ENCODE measurements at regions of chr5 and their contacts with region 1.

Region 1: DNA sequence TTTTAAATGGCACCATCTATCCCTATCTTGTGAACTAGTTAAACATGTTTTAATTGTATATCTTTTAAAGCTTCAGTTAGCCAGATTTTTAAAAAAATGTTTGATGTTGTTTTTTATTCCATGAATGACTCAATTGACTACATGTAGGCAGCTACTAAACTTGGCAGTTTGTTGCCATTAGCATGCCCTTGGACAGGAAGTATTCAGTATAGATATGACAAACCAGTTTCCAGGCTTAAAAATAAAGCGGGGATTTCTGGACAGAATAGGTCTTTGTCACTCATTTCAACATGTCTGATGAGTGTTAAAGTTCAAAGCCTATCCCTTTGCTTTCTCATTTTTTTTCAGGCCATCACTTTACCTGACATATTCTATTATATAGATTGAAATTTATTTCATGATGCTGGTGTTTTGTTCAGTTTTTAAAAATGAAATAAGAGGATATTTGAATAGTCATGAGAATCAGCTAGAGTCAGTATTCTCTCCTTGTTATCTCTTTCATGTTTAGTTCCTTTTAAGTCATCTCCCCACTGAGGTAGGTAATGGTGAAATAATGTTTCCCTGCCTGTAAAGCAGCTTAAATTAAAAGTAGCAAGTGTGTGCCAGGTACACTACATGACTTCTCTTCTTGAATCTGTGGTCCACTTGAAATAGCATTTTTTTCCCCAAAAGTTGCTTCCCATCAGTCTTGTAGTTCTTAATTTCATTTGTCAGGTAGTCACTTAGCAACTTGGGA is 11.9 kb downstream of the TNFAIP8 start:
- DNase-seq: peak in 3 of 14 experiments; percentile 58 to 71 (median 64)
- ATAC-seq: peak; percentile 62
- H3K4me3 ChIP-seq: no peak overlapping the region
- H3K4me3 Mint-ChIP-seq: peak overlapping the region; percentile 52
- H3K27ac ChIP-seq: peak overlapping the region; percentile 43 to 47
- H3K27ac Mint-ChIP-seq: peak overlapping the region; percentile 83
- H3K4me1 ChIP-seq: peaks cover 61% of the 10 kb centered on the region
- H3K4me1 Mint-ChIP-seq: peaks cover 84% of the 10 kb centered on the region
- H3K27me3 ChIP-seq: no peaks in the 10 kb centered on the region
- H3K27me3 Mint-ChIP-seq: no peaks in the 10 kb centered on the region
- CTCF ChIP-seq: no peak

Region 2: DNA sequence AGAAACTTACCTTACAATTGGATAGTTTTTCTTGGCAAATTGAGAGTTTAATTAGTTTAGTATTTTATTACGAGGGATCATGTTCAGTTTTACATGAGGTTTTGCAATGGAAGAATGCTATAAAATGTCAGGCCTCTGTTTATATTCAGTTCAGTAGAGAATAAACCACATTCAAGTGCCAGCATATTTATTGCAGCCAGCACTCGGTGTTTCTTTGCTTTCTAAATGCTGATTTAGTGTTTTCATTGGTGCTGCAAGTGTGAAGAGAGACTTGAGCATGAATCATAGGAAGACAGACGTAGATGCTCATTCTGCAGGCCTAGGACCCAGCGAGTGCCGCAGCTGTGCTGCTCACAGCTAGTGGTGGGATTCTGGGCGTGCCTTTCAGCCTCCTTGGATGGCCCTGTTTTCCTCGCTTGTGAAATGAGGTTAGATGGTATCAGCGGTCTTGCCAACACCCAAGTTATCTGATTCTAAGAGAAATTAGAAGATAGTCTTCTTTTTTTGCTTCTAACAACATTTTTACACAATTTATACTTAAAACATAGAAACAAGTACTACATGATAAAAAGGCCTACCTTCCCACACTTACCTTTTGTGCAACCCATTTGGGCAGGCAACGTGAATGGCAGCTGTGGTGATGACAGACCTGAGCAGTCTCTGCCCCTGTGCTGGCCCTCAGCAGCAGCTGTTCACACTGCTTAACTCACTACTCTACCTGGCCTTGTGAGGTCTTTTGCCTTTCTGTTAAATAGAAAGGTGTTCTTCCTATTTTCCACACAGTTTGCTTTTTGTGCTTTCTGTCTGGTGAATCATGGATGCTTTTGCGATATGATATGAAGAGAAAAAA is 38.7 kb before region 1 on chr5:
- CTCF ChIA-PET with region 1: interaction called, 3 read pairs
- POLR2A ChIA-PET with region 1: interaction called, 301 read pairs
- intact Hi-C with region 1: loop called in 1 of 2 experiments (anchors 5 kb)
- DNase-seq: peak in 13 of 14 experiments; percentile 45 to 85 (median 67)
- ATAC-seq: peak; percentile 60
- H3K4me3 ChIP-seq: peak overlapping the region; percentile 13
- H3K4me3 Mint-ChIP-seq: peak overlapping the region; percentile 83
- H3K27ac ChIP-seq: peak overlapping the region; percentile 77 to 94
- H3K27ac Mint-ChIP-seq: peak overlapping the region; percentile 97
- H3K4me1 ChIP-seq: peaks cover 84% of the 10 kb centered on the region
- H3K4me1 Mint-ChIP-seq: peaks cover 94% of the 10 kb centered on the region
- H3K27me3 ChIP-seq: no peaks in the 10 kb centered on the region
- H3K27me3 Mint-ChIP-seq: no peaks in the 10 kb centered on the region
- CTCF ChIP-seq: no peak

Region 3: DNA sequence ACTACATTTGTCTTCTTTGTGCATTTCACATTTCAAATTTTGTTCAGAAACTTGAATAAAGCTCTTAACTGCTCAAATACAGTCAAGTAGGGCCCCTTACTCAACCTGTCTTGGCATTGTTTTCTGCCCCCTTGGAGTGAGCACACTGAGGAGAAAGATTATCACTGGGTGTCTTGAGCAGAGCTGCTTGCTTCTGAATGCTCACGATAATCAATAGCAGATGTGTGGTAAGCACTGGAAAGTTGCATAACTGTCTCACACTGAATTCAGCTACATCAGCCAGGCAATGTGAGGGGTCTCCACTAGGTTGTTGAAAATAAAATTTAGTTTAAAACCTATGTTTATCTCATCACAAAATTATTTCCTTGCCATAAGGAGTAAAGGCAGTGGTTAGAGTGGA is 19.7 kb before region 1 on chr5:
- CTCF ChIA-PET with region 1: interaction called, 8 read pairs
- POLR2A ChIA-PET with region 1: interaction called, 301 read pairs
- intact Hi-C with region 1: loop called in 1 of 2 experiments (anchors 1 kb)
- DNase-seq: no peak
- ATAC-seq: no peak
- H3K4me3 ChIP-seq: no peak overlapping the region
- H3K4me3 Mint-ChIP-seq: peak overlapping the region; percentile 11
- H3K27ac ChIP-seq: no peak overlapping the region
- H3K27ac Mint-ChIP-seq: peak overlapping the region; percentile 86
- H3K4me1 ChIP-seq: peaks cover 73% of the 10 kb centered on the region
- H3K4me1 Mint-ChIP-seq: peaks cover 96% of the 10 kb centered on the region
- H3K27me3 ChIP-seq: no peaks in the 10 kb centered on the region
- H3K27me3 Mint-ChIP-seq: no peaks in the 10 kb centered on the region
- CTCF ChIP-seq: no peak

Region 4: DNA sequence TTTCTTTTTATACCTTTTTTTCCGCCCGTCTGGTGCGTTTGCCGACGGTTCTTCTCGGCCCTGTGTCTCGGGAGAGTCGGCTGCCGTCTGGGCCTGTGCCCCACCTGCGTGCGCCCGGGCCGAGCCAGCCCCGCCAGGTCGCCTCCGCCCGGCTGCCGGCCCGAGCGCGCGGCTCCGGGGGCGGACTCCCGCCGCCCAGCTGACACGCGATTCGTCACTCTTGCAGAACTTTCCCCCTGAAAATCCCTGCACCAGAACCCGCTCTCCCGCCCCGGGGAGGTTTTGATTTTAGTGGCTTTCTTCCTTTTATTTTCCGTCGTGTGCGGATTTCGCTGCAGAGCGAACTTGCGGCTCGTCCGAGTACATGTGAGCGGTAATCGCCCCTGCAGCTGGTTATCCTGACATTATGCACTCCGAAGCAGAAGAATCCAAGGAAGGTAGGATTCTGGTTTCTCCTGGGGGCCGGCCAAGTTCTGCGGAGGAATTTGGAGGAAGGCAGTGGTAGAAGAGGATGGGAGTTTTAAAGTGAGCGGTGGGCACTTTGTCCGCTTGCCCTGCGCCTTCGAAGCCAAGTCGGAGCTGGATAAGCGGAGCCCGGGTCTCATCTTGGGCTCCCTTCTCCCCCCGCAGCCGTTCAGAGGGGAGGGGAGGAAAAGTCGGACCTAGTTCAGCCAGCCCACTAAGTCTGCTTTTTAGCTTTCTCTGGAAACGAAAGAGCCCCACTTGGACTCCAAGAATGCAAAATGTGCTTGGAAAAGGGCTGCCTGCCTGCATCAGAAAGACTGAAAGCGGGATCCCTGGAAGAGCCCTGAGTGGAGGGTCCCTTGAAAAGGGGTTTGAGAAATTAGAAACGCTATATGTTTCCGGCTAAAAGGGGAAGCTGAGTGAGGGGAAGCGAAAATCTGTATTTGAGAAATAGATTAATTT is 11.7 kb before region 1 on chr5 and contains the start of gene TNFAIP8:
- CTCF ChIA-PET with region 1: interaction called, 8 read pairs
- POLR2A ChIA-PET with region 1: interaction called, 21 read pairs
- intact Hi-C with region 1: loop called in 1 of 2 experiments (anchors 2 kb)
- DNase-seq: peak in 6 of 14 experiments; percentile 28 to 81 (median 58)
- ATAC-seq: peak; percentile 37
- H3K4me3 ChIP-seq: peak within 1 kb of the TSS; percentile 61
- H3K4me3 Mint-ChIP-seq: peak within 1 kb of the TSS; percentile 93
- H3K27ac ChIP-seq: peak within 1 kb of the TSS; percentile 63 to 76
- H3K27ac Mint-ChIP-seq: peak within 1 kb of the TSS; percentile 86
- H3K4me1 ChIP-seq: peaks cover 89% of the 10 kb centered on the region
- H3K4me1 Mint-ChIP-seq: peaks cover 97% of the 10 kb centered on the region
- H3K27me3 ChIP-seq: no peaks in the 10 kb centered on the region
- H3K27me3 Mint-ChIP-seq: no peaks in the 10 kb centered on the region
- CTCF ChIP-seq: no peak
- total RNA-seq, gene TNFAIP8: 106 to 114 TPM

Region 5: DNA sequence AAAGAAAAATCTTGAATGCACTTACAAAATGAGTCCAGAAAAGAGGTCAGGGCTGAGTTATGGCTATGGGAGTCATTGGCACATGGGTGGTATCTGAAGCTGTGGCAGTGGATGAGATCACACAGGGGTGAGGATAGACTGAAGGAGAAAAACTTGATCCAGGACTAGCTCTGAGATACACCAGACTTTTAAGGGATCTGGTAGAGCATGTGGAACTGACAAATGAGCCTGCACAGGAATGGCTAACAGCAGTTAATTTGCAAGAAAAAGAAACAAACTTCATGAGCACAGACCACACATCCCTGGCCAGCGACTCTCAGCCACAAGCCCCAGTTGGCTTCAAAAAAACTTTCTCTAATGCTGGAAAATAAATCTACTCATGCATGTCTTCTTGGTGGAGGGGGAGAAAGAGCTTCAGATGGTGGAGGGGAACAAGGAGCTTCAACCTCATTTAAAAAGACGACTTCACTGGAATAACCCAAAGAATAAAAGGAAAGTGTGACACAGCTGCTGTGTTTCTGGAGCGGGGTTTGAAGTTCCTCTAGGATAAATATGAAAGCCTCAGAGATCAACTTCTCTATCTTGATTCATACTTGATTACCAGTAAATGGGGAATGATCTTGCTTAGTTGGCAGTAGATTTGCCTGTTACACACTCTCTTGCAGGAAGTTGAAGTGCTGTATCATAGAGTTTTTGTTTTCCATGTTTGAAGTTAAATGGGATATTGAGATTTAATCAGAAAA is 21.8 kb after region 1 on chr5:
- CTCF ChIA-PET with region 1: interaction called, 4 read pairs
- POLR2A ChIA-PET with region 1: no interaction called
- intact Hi-C with region 1: loop called in 1 of 2 experiments (anchors 2 kb)
- DNase-seq: no peak
- ATAC-seq: no peak
- H3K4me3 ChIP-seq: no peak overlapping the region
- H3K4me3 Mint-ChIP-seq: no peak overlapping the region
- H3K27ac ChIP-seq: peak overlapping the region in 1 of 2 donors; percentile 30
- H3K27ac Mint-ChIP-seq: peak overlapping the region; percentile 80
- H3K4me1 ChIP-seq: peaks cover 29% of the 10 kb centered on the region
- H3K4me1 Mint-ChIP-seq: peaks cover 85% of the 10 kb centered on the region
- H3K27me3 ChIP-seq: no peaks in the 10 kb centered on the region
- H3K27me3 Mint-ChIP-seq: no peaks in the 10 kb centered on the region
- CTCF ChIP-seq: no peak

Region 6: GRCh38 chr5:119400245-119400644 is 32.6 kb after region 1 on chr5:
- CTCF ChIA-PET with region 1: interaction called, 4 read pairs
- POLR2A ChIA-PET with region 1: no interaction called
- intact Hi-C with region 1: loop called in 1 of 2 experiments (anchors 5 kb)
- DNase-seq: no peak
- ATAC-seq: no peak
- H3K4me3 ChIP-seq: no peak overlapping the region
- H3K4me3 Mint-ChIP-seq: no peak overlapping the region
- H3K27ac ChIP-seq: no peak overlapping the region
- H3K27ac Mint-ChIP-seq: peak overlapping the region; percentile 80
- H3K4me1 ChIP-seq: peaks cover 15% of the 10 kb centered on the region
- H3K4me1 Mint-ChIP-seq: peaks cover 44% of the 10 kb centered on the region
- H3K27me3 ChIP-seq: no peaks in the 10 kb centered on the region
- H3K27me3 Mint-ChIP-seq: no peaks in the 10 kb centered on the region
- CTCF ChIP-seq: no peak

Region 7: GRCh38 chr5:119411935-119412602 is 44.4 kb after region 1 on chr5:
- CTCF ChIA-PET with region 1: interaction called, 11 read pairs
- POLR2A ChIA-PET with region 1: interaction called, 3 read pairs
- intact Hi-C with region 1: no loop called
- DNase-seq: peak in 13 of 14 experiments; percentile 11 to 87 (median 43)
- ATAC-seq: peak; percentile 94
- H3K4me3 ChIP-seq: peak overlapping the region; percentile 62
- H3K4me3 Mint-ChIP-seq: peak overlapping the region; percentile 85
- H3K27ac ChIP-seq: no peak overlapping the region
- H3K27ac Mint-ChIP-seq: peak overlapping the region; percentile 31
- H3K4me1 ChIP-seq: peaks cover 8% of the 10 kb centered on the region
- H3K4me1 Mint-ChIP-seq: peaks cover 20% of the 10 kb centered on the region
- H3K27me3 ChIP-seq: no peaks in the 10 kb centered on the region
- H3K27me3 Mint-ChIP-seq: no peaks in the 10 kb centered on the region
- CTCF ChIP-seq: peak; percentile 92

Region 8: DNA sequence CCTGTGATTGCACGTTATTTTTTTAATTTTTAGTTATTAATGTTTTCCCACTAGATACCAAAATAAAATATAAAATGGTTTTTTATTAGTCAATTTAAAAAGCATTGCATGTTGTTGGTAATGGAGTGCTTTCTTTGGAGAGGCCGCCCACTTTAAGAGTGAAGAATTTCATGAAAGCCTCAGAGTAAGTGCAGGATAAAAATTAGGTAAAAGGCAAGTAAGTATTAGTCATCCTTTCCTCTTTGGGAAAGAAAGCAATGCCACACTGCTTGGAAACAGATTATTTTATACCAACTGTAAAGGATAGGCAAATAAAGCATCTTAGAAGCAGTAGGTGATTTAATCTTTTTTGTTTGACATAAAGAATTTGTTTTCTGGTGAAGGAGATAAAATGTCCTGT is 147.5 kb after region 1 on chr5:
- CTCF ChIA-PET with region 1: no interaction called
- POLR2A ChIA-PET with region 1: no interaction called
- intact Hi-C with region 1: no loop called
- DNase-seq: no peak
- ATAC-seq: no peak
- H3K4me3 ChIP-seq: no peak overlapping the region
- H3K4me3 Mint-ChIP-seq: no peak overlapping the region
- H3K27ac ChIP-seq: no peak overlapping the region
- H3K27ac Mint-ChIP-seq: no peak overlapping the region
- H3K4me1 ChIP-seq: no peaks in the 10 kb centered on the region
- H3K4me1 Mint-ChIP-seq: no peaks in the 10 kb centered on the region
- H3K27me3 ChIP-seq: no peaks in the 10 kb centered on the region
- H3K27me3 Mint-ChIP-seq: no peaks in the 10 kb centered on the region
- CTCF ChIP-seq: no peak

Region 9: DNA sequence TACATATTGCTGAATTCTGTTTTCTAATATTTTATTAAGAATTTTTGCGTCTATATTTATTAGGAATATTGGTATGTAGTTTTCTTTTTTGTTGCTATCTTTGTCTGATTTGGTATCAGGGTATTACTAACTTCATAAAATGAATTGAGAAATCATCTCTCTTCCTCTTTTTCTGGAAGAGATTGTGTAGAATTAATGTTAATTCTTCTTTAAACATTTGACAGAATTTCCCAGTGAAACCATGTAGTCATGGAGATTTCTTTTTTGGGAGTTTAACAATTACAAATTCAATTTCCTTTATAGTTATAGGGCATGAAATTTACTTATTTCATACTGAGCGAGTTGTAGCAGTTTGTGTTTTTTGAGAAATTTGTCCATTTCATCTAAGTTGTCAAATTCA is 258.4 kb after region 1 on chr5:
- CTCF ChIA-PET with region 1: no interaction called
- POLR2A ChIA-PET with region 1: no interaction called
- intact Hi-C with region 1: no loop called
- DNase-seq: no peak
- ATAC-seq: no peak
- H3K4me3 ChIP-seq: no peak overlapping the region
- H3K4me3 Mint-ChIP-seq: no peak overlapping the region
- H3K27ac ChIP-seq: no peak overlapping the region
- H3K27ac Mint-ChIP-seq: no peak overlapping the region
- H3K4me1 ChIP-seq: no peaks in the 10 kb centered on the region
- H3K4me1 Mint-ChIP-seq: no peaks in the 10 kb centered on the region
- H3K27me3 ChIP-seq: no peaks in the 10 kb centered on the region
- H3K27me3 Mint-ChIP-seq: peaks cover 36% of the 10 kb centered on the region
- CTCF ChIP-seq: no peak

Region 10: GRCh38 chr5:120703923-120704587 is 1336.4 kb after region 1 on chr5:
- CTCF ChIA-PET with region 1: no interaction called
- POLR2A ChIA-PET with region 1: no interaction called
- intact Hi-C with region 1: no loop called
- DNase-seq: no peak
- ATAC-seq: no peak
- H3K4me3 ChIP-seq: no peak overlapping the region
- H3K4me3 Mint-ChIP-seq: no peak overlapping the region
- H3K27ac ChIP-seq: no peak overlapping the region
- H3K27ac Mint-ChIP-seq: no peak overlapping the region
- H3K4me1 ChIP-seq: no peaks in the 10 kb centered on the region
- H3K4me1 Mint-ChIP-seq: no peaks in the 10 kb centered on the region
- H3K27me3 ChIP-seq: no peaks in the 10 kb centered on the region
- H3K27me3 Mint-ChIP-seq: peaks cover 12% of the 10 kb centered on the region
- CTCF ChIP-seq: no peak